ENCODE measurements at regions of chr22 and their contacts with region 1.

Region 1: DNA sequence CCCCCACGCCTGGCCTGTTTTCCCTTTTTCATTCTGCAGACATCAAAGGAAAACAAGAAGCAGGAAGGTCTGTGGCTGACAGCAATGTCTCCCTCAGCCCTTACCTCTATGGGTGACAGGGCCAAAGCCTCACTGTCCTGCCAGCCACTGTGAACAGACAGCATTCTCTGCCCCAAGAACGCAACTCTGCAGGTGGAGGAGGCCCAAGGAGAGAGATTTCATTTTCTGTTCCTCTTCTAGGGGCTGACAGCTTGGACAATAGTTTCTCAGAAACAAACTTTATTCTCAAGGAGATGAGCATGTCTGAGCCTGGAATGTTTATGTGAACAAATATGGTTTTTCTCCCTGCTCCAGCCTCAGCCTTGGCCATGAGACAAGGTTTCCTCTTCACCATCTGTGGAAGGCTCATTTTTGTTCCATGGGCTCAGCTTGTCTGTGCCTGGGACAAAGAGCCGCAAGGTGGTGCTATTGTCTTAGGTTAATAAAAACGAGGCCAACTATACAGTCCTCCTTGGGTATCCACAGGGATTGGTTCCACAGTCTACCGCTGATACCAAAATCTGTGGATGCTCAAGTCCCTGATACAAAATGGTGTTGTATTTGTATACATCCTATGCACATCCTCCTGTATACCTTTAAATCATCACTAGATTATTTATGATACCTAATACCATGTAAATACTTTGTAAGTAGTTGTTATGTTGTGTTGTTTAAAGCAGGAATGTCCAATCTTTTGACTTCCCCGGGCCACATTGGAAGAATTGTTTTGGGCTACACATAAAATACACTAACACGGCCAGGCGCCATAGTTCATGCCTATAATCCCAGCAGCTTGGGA is 5.8 kb downstream of the PIWIL3 start:
- DNase-seq: peak; percentile 76
- ATAC-seq: peak; percentile 95
- H3K4me3 ChIP-seq: no peak overlapping the region
- H3K27ac ChIP-seq: no peak overlapping the region
- H3K4me1 ChIP-seq: peaks cover 2% of the 10 kb centered on the region; the same call in 1 of the 2 replicates
- H3K27me3 ChIP-seq: peaks cover 6% of the 10 kb centered on the region
- CTCF ChIP-seq: peak; percentile 81
- POLR2A ChIP-seq: no peak
- RAD21 ChIP-seq: peak; percentile 73

Region 2: GRCh38 chr22:24796860-24797259 is 28.1 kb after region 1 on chr22:
- CTCF ChIA-PET with region 1: no interaction called
- POLR2A ChIA-PET with region 1: no interaction called
- dilution Hi-C with region 1: no loop called
- in situ Hi-C with region 1: no loop called
- intact Hi-C with region 1: no loop called
- DNase-seq: no peak
- ATAC-seq: no peak
- H3K4me3 ChIP-seq: no peak overlapping the region
- H3K27ac ChIP-seq: no peak overlapping the region
- H3K4me1 ChIP-seq: no peaks in the 10 kb centered on the region
- H3K27me3 ChIP-seq: 0 out of 2 replicates have a peak, but pooled peaks cover 2% of the 10 kb centered on the region
- CTCF ChIP-seq: no peak
- POLR2A ChIP-seq: no peak
- RAD21 ChIP-seq: no peak

Region 3: DNA sequence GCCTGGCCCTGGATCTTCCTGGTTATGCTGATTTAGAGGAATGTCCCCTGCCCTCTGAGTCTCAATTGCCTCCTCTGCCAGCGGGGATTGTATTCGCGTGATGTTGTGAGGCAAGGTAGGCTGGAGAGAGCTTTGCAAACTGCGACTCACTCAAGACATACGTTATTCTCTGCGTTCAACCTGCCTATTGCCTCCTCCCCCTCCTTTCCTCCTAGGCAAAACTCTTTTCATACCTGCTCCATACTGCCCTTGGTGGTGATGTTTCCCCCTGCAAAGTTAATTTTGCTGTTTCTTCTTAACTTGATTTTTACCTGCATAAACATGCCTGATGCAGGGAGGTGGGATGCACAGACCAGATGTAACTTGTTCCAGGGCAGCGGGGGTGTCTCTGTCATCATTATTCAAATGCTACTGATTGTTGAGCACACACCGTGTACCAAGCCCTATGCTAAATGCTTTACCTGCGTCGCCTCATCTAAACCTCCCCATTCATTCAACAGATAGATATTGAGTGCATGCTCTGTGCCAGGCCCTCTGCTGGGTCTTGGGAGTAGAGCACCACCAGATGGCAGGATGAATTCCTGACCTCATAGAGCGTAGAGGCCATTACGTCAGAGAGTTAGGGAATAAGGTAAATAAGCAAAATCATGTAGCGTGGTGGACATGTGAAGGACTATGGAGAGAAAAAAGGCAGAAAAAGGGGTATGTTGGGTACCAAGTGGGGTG is 66.3 kb after region 1 on chr22:
- CTCF ChIA-PET with region 1: no interaction called
- POLR2A ChIA-PET with region 1: no interaction called
- dilution Hi-C with region 1: no loop called
- in situ Hi-C with region 1: no loop called
- intact Hi-C with region 1: loop called (anchors 1 kb)
- DNase-seq: peak; percentile 11
- ATAC-seq: no peak
- H3K4me3 ChIP-seq: no peak overlapping the region
- H3K27ac ChIP-seq: no peak overlapping the region
- H3K4me1 ChIP-seq: no peaks in the 10 kb centered on the region
- H3K27me3 ChIP-seq: peaks cover 13% of the 10 kb centered on the region
- CTCF ChIP-seq: no peak
- POLR2A ChIP-seq: no peak
- RAD21 ChIP-seq: no peak

Region 4: DNA sequence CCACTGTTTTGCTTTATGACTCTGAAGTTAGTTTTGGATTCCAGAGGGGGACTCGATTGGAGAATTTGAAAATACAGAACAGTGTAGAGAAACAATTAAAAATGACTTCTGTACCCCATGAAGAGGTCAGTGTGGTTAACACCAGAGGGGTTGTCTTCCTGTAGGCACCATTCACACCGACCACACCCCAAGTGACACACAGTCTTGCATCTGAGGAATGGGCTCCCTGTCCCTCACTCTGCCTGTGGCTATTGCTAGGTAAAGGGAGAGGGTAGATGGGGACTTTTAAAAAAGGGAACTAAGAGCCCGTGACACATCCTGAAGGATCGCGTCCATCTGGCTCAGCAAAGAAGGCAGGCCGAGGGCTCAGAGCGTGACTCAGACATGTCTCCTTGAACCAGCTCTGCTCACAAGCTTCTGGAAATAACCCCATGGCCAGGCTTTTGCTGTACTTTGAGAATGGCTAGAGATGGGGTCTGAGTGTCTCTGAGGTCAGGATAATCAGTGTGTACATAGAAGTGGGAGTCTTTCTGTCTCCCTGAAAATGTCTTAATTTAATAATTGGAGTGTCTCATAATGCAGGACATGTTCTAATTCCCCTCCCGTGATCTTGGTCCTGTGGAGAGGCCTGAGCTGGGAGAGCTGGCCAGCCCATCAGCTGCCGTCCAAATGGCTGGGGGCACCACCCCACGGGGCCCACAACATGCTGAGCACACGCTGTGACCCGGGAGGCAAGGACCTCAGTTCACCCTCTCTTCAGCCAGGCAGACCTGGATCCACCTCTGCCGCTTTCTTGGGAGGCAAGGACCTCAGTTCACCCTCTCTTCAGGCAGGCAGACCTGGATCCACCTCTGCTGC is 76.5 kb after region 1 on chr22:
- CTCF ChIA-PET with region 1: interaction called, 4 read pairs
- POLR2A ChIA-PET with region 1: no interaction called
- dilution Hi-C with region 1: no loop called
- in situ Hi-C with region 1: no loop called
- intact Hi-C with region 1: loop called (anchors 1 kb)
- DNase-seq: peak; percentile 9
- ATAC-seq: no peak
- H3K4me3 ChIP-seq: no peak overlapping the region
- H3K27ac ChIP-seq: no peak overlapping the region
- H3K4me1 ChIP-seq: no peaks in the 10 kb centered on the region
- H3K27me3 ChIP-seq: no peaks in the 10 kb centered on the region
- CTCF ChIP-seq: no peak
- POLR2A ChIP-seq: no peak
- RAD21 ChIP-seq: no peak

Region 5: GRCh38 chr22:24867323-24868022 is 98.7 kb after region 1 on chr22:
- CTCF ChIA-PET with region 1: no interaction called
- POLR2A ChIA-PET with region 1: no interaction called
- dilution Hi-C with region 1: no loop called
- in situ Hi-C with region 1: no loop called
- intact Hi-C with region 1: no loop called
- DNase-seq: no peak
- ATAC-seq: no peak
- H3K4me3 ChIP-seq: no peak overlapping the region
- H3K27ac ChIP-seq: no peak overlapping the region
- H3K4me1 ChIP-seq: no peaks in the 10 kb centered on the region
- H3K27me3 ChIP-seq: no peaks in the 10 kb centered on the region
- CTCF ChIP-seq: no peak
- POLR2A ChIP-seq: no peak
- RAD21 ChIP-seq: no peak

Region 6: GRCh38 chr22:24938741-24939341 is 170.1 kb after region 1 on chr22:
- CTCF ChIA-PET with region 1: no interaction called
- POLR2A ChIA-PET with region 1: no interaction called
- dilution Hi-C with region 1: no loop called
- in situ Hi-C with region 1: no loop called
- intact Hi-C with region 1: loop called (anchors 5 kb)
- DNase-seq: peak; percentile 25
- ATAC-seq: peak; percentile 57
- H3K4me3 ChIP-seq: no peak overlapping the region
- H3K27ac ChIP-seq: no peak overlapping the region
- H3K4me1 ChIP-seq: no peaks in the 10 kb centered on the region
- H3K27me3 ChIP-seq: no peaks in the 10 kb centered on the region
- CTCF ChIP-seq: peak; percentile 58
- POLR2A ChIP-seq: no peak
- RAD21 ChIP-seq: peak; percentile 46

Region 7: GRCh38 chr22:25048659-25049647 is 280.2 kb after region 1 on chr22:
- CTCF ChIA-PET with region 1: interaction called, 3 read pairs
- POLR2A ChIA-PET with region 1: no interaction called
- dilution Hi-C with region 1: no loop called
- in situ Hi-C with region 1: loop called (anchors 10 kb)
- intact Hi-C with region 1: loop called (anchors 1 kb)
- DNase-seq: peak; percentile 23
- ATAC-seq: peak; percentile 91
- H3K4me3 ChIP-seq: no peak overlapping the region
- H3K27ac ChIP-seq: no peak overlapping the region
- H3K4me1 ChIP-seq: no peaks in the 10 kb centered on the region
- H3K27me3 ChIP-seq: no peaks in the 10 kb centered on the region
- CTCF ChIP-seq: peak; percentile 68
- POLR2A ChIP-seq: no peak
- RAD21 ChIP-seq: peak; percentile 74

Region 8: GRCh38 chr22:25139062-25139461 is 370.3 kb after region 1 on chr22:
- CTCF ChIA-PET with region 1: no interaction called
- POLR2A ChIA-PET with region 1: no interaction called
- dilution Hi-C with region 1: no loop called
- in situ Hi-C with region 1: no loop called
- intact Hi-C with region 1: no loop called
- DNase-seq: no peak
- ATAC-seq: no peak
- H3K4me3 ChIP-seq: no peak overlapping the region
- H3K27ac ChIP-seq: no peak overlapping the region
- H3K4me1 ChIP-seq: no peaks in the 10 kb centered on the region
- H3K27me3 ChIP-seq: no peaks in the 10 kb centered on the region
- CTCF ChIP-seq: no peak
- POLR2A ChIP-seq: no peak
- RAD21 ChIP-seq: no peak

Measured in IMR-90 (cell line).